ENCODE measurements at regions of chr5 and their contacts with region 1.

Region 1: GRCh38 chr5:34929150-34929719 is at the start of gene DNAJC21:
- DNase-seq: peak; percentile 87
- ATAC-seq: peak; percentile 89
- H3K4me3 ChIP-seq: peak within 1 kb of the TSS; percentile 90 to 93
- H3K27ac ChIP-seq: peak within 1 kb of the TSS; percentile 88
- H3K4me1 ChIP-seq: peaks cover 22 to 30% of the 10 kb centered on the region in 2 experiments
- H3K27me3 ChIP-seq: no peaks in the 10 kb centered on the region
- CTCF ChIP-seq: no peak
- POLR2A ChIP-seq: no peak
- RAD21 ChIP-seq: no peak
- total RNA-seq, gene DNAJC21: 34.7 TPM

Region 2: DNA sequence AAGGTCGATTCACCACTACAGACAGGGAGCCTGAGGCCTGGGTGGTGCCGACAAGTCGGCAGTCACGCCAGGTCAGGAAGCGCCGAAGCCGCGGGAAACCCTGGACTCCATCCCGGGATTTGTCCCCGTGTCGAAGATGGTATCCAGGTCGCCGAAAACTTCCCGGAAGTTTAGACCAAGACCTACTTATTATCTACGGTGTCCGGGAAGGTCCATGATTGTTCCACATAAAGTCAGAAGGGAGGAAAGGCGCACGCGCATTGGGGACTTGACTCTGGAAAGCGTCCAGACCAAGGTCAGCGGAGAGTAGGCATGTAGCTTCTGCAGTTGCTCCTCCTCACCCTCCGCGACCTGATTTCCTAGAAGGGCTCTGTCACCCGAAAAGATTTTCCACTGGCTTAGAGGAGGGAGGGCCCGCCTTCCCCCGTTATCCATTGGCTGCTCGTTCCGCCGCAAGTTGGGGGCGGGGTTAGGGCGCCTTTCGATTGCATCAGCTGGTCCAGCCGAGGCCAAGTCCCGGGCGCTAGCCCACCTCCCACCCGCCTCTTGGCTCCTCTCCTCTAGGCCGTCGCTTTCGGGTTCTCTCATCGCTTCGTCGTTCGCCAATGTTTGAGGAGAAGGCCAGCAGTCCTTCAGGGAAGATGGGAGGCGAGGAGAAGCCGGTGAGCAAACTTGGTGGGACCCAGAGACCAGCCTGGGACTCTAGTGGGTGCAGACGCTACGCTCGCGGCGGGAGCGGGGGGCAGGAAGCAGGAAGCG is 1488.6 kb before region 1 on chr5 and contains the start of gene TARS1:
- CTCF ChIA-PET with region 1: no interaction called
- POLR2A ChIA-PET with region 1: no interaction called
- RAD21 ChIA-PET with region 1: no interaction called
- intact Hi-C with region 1: loop called (anchors 10 kb)
- DNase-seq: peak; percentile 100
- ATAC-seq: peak; percentile 97
- H3K4me3 ChIP-seq: peak within 1 kb of the TSS; percentile 76 to 97
- H3K27ac ChIP-seq: peak within 1 kb of the TSS; percentile 92
- H3K4me1 ChIP-seq: peaks cover 13 to 22% of the 10 kb centered on the region in 2 experiments; a peak in 3 of 4 replicates
- H3K27me3 ChIP-seq: no peaks in the 10 kb centered on the region
- CTCF ChIP-seq: no peak
- POLR2A ChIP-seq: peak; percentile 46
- RAD21 ChIP-seq: no peak
- total RNA-seq, gene TARS1: 291 TPM

Region 3: GRCh38 chr5:34915139-34915855 is 13.9 kb before region 1 on chr5 and contains the starts of genes BRIX1 and RAD1:
- CTCF ChIA-PET with region 1: interaction called, 5 read pairs
- POLR2A ChIA-PET with region 1: interaction called, 26 read pairs
- RAD21 ChIA-PET with region 1: interaction called in 1 of 2 experiments, 6 read pairs
- intact Hi-C with region 1: loop called (anchors 1 kb)
- DNase-seq: peak; percentile 95
- ATAC-seq: peak; percentile 98
- H3K4me3 ChIP-seq: peak within 1 kb of the TSS; percentile 97 to 99
- H3K27ac ChIP-seq: peak within 1 kb of the TSS; percentile 81
- H3K4me1 ChIP-seq: peaks cover 15 to 27% of the 10 kb centered on the region in 2 experiments
- H3K27me3 ChIP-seq: no peaks in the 10 kb centered on the region
- CTCF ChIP-seq: no peak
- POLR2A ChIP-seq: peak; percentile 82
- RAD21 ChIP-seq: no peak
- total RNA-seq, gene BRIX1: 76.4 TPM
- total RNA-seq, gene RAD1: 24.8 TPM

Measured in HCT116 (cell line).